MCF 10A (cell line): ENCODE measurements at regions of chr14 and their contacts with region 1.

Region 1: DNA sequence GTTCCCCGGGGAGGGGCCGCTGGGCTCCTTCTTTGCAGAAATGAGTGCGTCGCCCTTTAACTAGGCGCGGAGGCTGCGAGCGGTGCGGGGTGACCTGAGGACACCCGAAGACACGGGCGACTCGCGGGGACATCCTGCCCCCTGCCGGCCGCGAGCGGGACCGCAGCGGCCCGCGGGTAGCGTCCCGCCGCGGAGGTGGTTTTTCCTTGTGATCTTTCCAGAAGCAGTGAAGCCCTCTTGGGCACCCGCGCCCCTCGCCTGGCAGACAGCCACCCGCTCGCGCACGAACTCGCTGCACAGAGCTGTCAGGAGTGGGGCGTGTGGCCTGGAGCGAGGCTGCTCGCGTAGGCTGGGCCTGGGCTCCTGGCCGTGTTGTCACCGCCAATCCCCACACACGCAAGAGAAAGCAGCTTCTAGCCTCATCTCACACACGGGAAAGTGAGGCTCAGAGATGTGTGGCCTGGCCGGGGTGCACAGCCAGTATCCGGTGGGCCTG is 67.2 kb downstream of the DIO3 start:
- DNase-seq: peak; percentile 68
- H3K4me3 Mint-ChIP-seq: no peak overlapping the region
- H3K27ac Mint-ChIP-seq: no peak overlapping the region
- H3K4me1 Mint-ChIP-seq: no peaks in the 10 kb centered on the region
- H3K27me3 Mint-ChIP-seq: peaks cover 39% of the 10 kb centered on the region
- CTCF ChIP-seq: peak; percentile 94

Region 2: DNA sequence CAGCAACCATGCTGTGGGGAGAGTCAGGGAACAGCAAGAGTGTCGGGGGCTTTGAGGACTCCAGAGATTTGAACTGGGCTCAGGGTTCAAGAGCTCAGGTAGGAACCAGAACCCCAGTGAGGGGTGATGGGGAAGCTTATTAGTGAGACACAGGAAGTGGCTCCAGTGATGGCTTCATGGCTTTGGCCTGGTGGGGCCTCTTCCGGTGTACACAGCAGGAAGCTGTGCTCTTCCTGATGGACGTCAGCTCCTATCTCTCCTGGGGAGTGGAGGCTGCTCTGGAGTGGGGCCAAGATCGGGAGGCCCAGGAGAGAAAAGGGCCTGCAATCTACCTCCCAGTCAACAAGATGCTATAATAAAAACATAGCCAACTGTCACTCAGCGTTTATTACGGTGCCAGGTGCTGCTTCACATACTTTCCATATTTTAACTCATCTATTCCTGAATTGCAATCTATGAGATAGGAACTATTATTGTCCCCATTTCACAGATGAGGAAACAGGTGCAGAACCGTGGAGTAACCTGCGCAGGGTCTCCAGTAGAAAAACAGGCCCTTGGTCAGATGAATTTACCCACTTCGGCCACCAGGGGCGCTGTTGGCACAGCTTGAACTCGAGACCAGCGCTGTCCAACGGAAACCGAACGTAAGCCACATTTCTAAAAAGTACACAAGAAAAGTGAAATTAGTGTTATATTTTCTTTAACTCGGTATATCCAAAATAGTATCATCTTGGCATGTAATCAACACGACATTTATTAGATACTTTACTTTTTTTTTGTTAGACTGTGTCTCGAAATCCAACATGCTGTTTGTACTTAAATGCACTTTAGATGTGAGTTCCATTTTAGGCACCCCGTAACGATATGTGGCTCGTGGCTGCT is 965.4 kb before region 1 on chr14:
- CTCF ChIA-PET with region 1: interaction called, 4 read pairs
- POLR2A ChIA-PET with region 1: no interaction called
- intact Hi-C with region 1: loop called (anchors 10 kb)
- DNase-seq: peak; percentile 76
- H3K4me3 Mint-ChIP-seq: no peak overlapping the region
- H3K27ac Mint-ChIP-seq: no peak overlapping the region
- H3K4me1 Mint-ChIP-seq: peaks cover 9% of the 10 kb centered on the region
- H3K27me3 Mint-ChIP-seq: no peaks in the 10 kb centered on the region
- CTCF ChIP-seq: peak; percentile 92

Region 3: DNA sequence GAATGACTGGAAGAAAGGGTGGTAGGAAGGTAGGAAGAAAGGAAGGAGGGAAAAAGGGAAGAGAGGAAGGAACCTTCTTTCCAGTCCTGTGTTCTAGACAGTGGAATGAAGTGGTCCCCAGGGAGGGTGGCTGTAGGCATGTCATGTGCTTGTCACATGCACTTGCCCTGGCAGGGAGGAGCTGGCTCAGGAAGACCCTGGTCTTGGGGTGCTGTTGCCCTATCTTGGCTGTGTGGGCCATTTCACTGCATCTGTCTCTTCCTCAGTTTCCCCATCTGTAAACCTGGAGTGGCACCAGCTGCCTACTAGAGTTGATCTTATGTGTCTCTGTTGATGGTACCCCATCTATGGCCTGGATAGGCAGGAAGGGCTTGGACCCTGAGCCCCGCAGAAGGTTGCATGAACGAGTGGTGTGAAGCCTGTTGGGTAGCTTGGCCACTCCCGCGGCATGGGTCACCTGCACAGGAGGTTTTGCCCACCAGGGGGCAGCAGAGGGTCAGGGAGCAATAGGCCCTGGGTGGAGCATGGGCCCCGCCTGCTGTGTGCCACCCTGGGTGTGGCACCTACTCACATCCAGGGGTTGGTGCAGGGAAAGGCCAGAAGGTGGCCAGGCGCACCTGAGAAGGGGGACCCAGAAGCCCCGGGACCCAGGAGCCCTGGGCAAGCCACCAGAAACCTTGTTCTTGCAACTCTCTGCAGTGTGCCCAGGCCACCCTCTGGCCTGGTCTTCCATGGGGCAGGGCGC is 777.5 kb before region 1 on chr14:
- CTCF ChIA-PET with region 1: interaction called, 4 read pairs
- POLR2A ChIA-PET with region 1: no interaction called
- intact Hi-C with region 1: loop called (anchors 1 kb)
- DNase-seq: peak; percentile 76
- H3K4me3 Mint-ChIP-seq: no peak overlapping the region
- H3K27ac Mint-ChIP-seq: no peak overlapping the region
- H3K4me1 Mint-ChIP-seq: no peaks in the 10 kb centered on the region
- H3K27me3 Mint-ChIP-seq: no peaks in the 10 kb centered on the region
- CTCF ChIP-seq: peak; percentile 86

Region 4: DNA sequence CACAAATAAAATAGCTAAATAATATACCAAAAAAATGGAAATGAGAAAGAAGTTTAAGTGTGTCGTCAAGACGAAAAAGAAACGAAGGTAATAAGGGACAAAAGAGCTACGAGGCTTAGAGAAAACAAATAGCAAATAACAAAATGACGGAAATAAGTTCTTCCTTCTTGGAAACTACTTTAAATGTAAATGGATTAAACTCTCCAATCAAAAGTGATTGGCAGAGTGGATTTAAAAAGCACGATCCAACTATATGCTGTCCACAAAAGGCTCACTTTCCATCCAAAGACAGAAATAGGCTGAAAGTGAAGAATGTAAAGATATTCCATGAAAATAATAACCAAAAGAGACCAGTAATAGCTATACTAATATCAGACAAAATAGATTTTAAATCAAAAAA is 15.1 kb after region 1 on chr14:
- CTCF ChIA-PET with region 1: interaction called, 11 read pairs
- POLR2A ChIA-PET with region 1: no interaction called
- intact Hi-C with region 1: no loop called
- DNase-seq: no peak
- H3K4me3 Mint-ChIP-seq: no peak overlapping the region
- H3K27ac Mint-ChIP-seq: no peak overlapping the region
- H3K4me1 Mint-ChIP-seq: no peaks in the 10 kb centered on the region
- H3K27me3 Mint-ChIP-seq: peaks cover 88% of the 10 kb centered on the region
- CTCF ChIP-seq: no peak